Activated CD4-positive, alpha-beta T cell treated with anti-CD3 and anti-CD28 coated beads for 36 hours (primary cell): ENCODE measurements at regions of chr6 and their contacts with region 1.

Region 1: GRCh38 chr6:119129148-119129967 is 50.9 kb upstream of the FAM184A start:
- DNase-seq: no peak
- ATAC-seq: peak; percentile 86
- H3K4me3 Mint-ChIP-seq: no peak overlapping the region
- H3K27ac Mint-ChIP-seq: no peak overlapping the region
- H3K4me1 Mint-ChIP-seq: peaks cover 6% of the 10 kb centered on the region
- H3K27me3 Mint-ChIP-seq: no peaks in the 10 kb centered on the region

Region 2: DNA sequence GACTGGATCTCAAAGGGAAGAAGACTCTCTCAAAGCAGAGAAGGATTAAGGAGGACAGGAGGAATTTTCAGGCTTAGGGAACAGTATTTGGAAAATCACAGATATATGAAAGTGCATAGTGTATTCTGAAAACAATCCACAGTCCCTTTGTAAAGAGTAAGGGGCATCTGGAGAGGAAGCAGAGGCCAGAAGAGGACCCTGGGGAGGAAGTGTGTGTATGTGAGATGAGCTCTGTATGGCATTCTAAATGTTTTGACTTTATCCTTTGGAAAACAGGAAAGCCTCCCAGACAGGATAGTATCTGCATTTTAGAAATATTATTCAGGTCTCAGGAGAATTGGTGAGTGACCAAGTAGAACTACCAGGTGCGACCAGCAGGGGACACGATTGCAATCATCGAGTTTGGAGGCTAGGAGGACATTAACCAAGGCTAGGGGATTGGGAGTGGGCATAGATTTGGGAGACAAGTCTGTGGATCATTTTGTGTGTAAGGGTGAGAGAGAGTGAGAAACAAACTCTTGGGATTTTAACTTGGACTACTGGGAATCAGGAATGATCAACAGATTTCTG is 12.6 kb before region 1 on chr6:
- CTCF ChIA-PET with region 1: interaction called, 12 read pairs
- POLR2A ChIA-PET with region 1: no interaction called
- intact Hi-C with region 1: no loop called
- DNase-seq: peak; percentile 35
- ATAC-seq: no peak
- H3K4me3 Mint-ChIP-seq: no peak overlapping the region
- H3K27ac Mint-ChIP-seq: no peak overlapping the region
- H3K4me1 Mint-ChIP-seq: no peaks in the 10 kb centered on the region
- H3K27me3 Mint-ChIP-seq: no peaks in the 10 kb centered on the region